ENCODE measurements at regions of chr2 and their contacts with region 1.

Region 1: GRCh38 chr2:27133905-27134780 is at the start of gene PREB:
- DNase-seq: peak; percentile 98
- H3K4me3 Mint-ChIP-seq: peak within 1 kb of the TSS; percentile 95
- H3K27ac Mint-ChIP-seq: peak within 1 kb of the TSS; percentile 93
- H3K4me1 Mint-ChIP-seq: peaks cover 20% of the 10 kb centered on the region
- H3K27me3 Mint-ChIP-seq: no peaks in the 10 kb centered on the region
- total RNA-seq, gene PREB: 45.2 to 49.5 TPM

Region 2: GRCh38 chr2:26396734-26397298 is 737.3 kb before region 1 on chr2:
- CTCF ChIA-PET with region 1: no interaction called
- intact Hi-C with region 1: no loop called
- DNase-seq: peak; percentile 69
- H3K4me3 Mint-ChIP-seq: no peak overlapping the region
- H3K27ac Mint-ChIP-seq: peak overlapping the region; percentile 4
- H3K4me1 Mint-ChIP-seq: peaks cover 19% of the 10 kb centered on the region
- H3K27me3 Mint-ChIP-seq: no peaks in the 10 kb centered on the region

Region 3: GRCh38 chr2:26764078-26764887 is 369.9 kb before region 1 on chr2 and contains the start of gene SLC35F6:
- CTCF ChIA-PET with region 1: no interaction called
- intact Hi-C with region 1: no loop called
- DNase-seq: peak; percentile 81
- H3K4me3 Mint-ChIP-seq: peak within 1 kb of the TSS; percentile 91
- H3K27ac Mint-ChIP-seq: peak within 1 kb of the TSS; percentile 81
- H3K4me1 Mint-ChIP-seq: peaks cover 44% of the 10 kb centered on the region
- H3K27me3 Mint-ChIP-seq: no peaks in the 10 kb centered on the region
- total RNA-seq, gene SLC35F6: 2.0 to 2.7 TPM

Region 4: DNA sequence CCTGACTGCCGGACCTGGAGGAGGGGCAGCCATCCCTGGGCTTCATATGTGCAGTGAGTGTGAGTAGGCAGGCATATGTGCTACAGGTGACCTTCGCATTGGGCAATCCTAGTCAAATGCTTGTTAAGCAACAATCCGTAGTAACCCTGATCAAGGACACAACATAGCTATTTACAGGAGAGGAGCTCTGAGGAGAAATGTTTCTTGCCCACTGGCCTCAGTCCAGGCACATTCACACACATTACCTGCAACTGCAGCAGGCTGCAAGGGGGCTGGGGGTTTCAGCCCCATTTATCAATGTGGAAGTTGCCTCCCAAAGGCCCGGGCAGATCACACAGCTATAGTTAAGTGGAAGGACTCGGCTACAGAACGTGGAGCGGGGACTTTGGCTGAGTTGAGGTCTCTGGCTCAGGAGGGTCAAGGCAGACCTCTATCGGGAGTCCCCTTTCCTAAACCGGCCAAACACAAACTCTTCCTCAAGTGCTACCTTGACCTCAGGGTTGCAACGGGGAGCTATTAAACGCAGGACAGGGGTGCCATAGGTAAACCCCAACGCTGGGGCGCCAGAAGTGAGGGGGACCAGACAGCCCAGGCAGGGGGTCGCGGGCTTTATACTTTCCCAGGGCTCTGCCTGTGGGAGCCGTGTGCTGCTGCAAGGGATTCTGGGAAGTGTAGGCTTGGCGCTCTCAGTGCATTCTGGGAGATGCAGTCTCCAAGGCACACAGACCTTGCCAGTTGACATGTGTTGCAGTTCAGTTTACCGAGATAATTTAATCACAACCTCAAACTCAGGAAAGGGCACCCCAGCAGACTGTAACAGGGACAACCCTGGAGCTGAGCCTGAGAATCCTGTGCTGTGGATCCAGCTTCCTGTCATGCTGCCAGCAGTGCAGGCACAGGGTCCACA is 38.1 kb before region 1 on chr2:
- CTCF ChIA-PET with region 1: no interaction called
- intact Hi-C with region 1: loop called (anchors 1 kb)
- DNase-seq: peak; percentile 66
- H3K4me3 Mint-ChIP-seq: peak overlapping the region; percentile 62
- H3K27ac Mint-ChIP-seq: no peak overlapping the region
- H3K4me1 Mint-ChIP-seq: peaks cover 14% of the 10 kb centered on the region
- H3K27me3 Mint-ChIP-seq: no peaks in the 10 kb centered on the region

Region 5: DNA sequence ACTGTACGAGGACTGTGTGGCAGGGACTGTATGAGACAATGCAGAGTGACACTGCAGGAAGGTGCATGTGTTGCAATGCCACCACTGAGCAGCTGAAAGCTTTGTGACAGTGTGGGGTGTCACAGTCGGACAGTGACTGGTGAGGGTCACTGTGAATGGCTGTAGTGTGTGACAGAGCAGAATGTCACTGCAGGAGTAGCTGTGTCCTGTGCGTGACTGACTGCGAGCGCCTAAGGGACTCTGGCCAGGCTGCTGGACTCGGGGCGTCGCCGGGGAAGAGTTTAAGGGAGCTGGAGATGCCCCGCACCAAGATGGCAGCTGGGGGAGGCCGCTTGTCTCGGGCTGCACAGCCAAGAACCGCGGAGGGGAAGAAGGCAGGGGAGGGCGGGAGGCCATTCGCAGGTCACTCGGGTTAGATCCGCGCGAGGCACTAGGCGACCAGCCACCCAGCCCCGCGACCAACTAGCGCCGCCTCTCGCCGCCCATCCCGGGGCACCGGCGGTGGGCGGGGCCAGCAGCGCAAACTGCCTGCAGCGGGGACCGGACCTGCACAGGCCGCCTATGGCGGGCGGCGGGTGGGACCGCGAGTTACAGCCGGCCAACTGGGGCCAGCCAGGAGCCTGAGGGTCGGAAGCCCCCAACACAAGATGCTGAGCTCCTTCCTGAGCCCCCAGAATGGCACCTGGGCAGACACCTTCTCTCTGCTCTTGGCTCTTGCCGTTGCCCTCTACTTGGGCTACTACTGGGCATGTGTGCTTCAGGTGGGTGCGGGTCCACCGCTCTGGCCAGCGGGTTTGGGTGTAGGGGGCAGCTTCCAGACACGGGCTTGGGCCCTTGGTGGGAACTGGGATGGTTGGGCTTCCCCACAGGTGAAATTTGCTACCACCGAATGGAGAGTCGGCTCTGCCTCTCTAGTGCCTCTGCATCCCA is 10.6 kb before region 1 on chr2 and contains the start of gene ABHD1:
- CTCF ChIA-PET with region 1: interaction called, 17 read pairs
- intact Hi-C with region 1: loop called (anchors 1 kb)
- DNase-seq: peak; percentile 51
- H3K4me3 Mint-ChIP-seq: peak within 1 kb of the TSS; percentile 79
- H3K27ac Mint-ChIP-seq: no peak within 1 kb of the TSS
- H3K4me1 Mint-ChIP-seq: peaks cover 12% of the 10 kb centered on the region
- H3K27me3 Mint-ChIP-seq: peaks cover 16% of the 10 kb centered on the region
- total RNA-seq, gene ABHD1: 0.17 to 0.19 TPM

Region 6: DNA sequence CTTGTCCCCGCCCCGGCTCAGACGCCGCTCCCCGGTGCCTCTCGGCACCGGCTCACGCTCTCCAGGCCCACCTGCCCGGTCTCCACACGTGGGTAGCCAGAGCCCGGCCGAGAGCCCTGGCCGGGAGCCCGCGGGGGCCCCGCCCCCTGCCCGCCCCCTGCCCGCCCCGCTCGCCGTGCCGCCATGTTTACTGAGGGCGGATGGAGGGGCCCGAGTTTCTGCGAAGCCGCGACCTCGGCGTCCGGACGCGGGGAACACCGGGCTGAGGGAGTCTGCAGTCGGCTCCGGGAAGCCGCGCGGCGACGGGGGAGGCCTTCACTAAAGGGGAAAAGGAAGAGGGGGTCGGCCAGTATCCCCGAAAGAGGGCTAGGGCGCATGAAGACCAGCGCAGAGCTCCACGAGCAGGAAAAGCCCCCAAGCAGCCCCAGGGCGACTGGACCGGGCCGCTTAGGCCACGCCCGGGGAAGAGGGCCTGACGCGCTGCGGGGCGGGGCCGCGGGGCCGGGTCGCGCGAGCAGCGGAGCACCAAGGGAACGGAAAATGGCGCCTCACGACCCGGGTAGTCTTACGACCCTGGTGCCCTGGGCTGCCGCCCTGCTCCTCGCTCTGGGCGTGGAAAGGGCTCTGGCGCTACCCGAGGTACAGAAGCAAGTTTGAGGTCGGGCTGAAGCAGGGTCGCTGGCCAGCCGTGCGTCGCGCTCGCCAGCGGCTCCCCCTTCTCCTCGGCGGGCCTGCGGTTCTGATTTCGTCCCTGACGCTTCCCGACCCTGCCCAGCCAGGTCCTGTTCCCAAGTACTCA is 77.9 kb after region 1 on chr2 and contains the starts of genes ATRAID and SLC5A6:
- CTCF ChIA-PET with region 1: no interaction called
- intact Hi-C with region 1: loop called (anchors 1 kb)
- DNase-seq: peak; percentile 88
- H3K4me3 Mint-ChIP-seq: peak within 1 kb of the TSS; percentile 98
- H3K27ac Mint-ChIP-seq: peak within 1 kb of the TSS; percentile 99
- H3K4me1 Mint-ChIP-seq: peaks cover 29% of the 10 kb centered on the region
- H3K27me3 Mint-ChIP-seq: no peaks in the 10 kb centered on the region
- total RNA-seq, gene ATRAID: 80.5 to 80.8 TPM
- total RNA-seq, gene SLC5A6: 22.6 to 24.8 TPM

Region 7: GRCh38 chr2:27217217-27218121 is 83.3 kb after region 1 on chr2 and contains the start of gene CAD:
- CTCF ChIA-PET with region 1: no interaction called
- intact Hi-C with region 1: loop called (anchors 1 kb)
- DNase-seq: peak; percentile 89
- H3K4me3 Mint-ChIP-seq: peak within 1 kb of the TSS; percentile 97
- H3K27ac Mint-ChIP-seq: peak within 1 kb of the TSS; percentile 86
- H3K4me1 Mint-ChIP-seq: peaks cover 43% of the 10 kb centered on the region
- H3K27me3 Mint-ChIP-seq: no peaks in the 10 kb centered on the region
- total RNA-seq, gene CAD: 109 to 112 TPM

Region 8: DNA sequence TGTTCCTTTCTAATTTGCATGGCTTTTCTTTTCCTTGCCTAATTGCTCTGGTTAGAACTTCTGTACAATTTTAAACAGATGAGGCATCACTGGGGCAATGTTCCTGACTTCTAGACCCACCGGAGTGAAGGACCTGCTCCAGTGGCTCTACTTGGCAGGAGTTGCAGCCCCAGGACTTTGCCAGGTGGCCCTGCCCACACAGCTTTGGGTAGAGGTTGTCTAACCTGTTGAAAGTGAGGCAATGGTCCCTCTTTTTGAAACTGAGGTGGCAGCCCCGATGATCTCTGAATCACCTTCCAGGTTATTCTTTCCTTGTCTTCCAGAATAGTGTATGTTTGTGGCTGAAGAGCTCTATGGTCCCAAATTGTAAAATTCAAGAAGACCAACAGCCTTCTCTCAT is 418.8 kb after region 1 on chr2:
- CTCF ChIA-PET with region 1: no interaction called
- intact Hi-C with region 1: no loop called
- DNase-seq: no peak
- H3K4me3 Mint-ChIP-seq: no peak overlapping the region
- H3K27ac Mint-ChIP-seq: no peak overlapping the region
- H3K4me1 Mint-ChIP-seq: no peaks in the 10 kb centered on the region
- H3K27me3 Mint-ChIP-seq: peaks cover 4% of the 10 kb centered on the region

Measured in activated naive CD4-positive, alpha-beta T cell treated with anti-CD3 and anti-CD28 coated beads for 36 hours (primary cell).